ENCODE measurements at regions of chr3 and their contacts with region 1.

Region 1: DNA sequence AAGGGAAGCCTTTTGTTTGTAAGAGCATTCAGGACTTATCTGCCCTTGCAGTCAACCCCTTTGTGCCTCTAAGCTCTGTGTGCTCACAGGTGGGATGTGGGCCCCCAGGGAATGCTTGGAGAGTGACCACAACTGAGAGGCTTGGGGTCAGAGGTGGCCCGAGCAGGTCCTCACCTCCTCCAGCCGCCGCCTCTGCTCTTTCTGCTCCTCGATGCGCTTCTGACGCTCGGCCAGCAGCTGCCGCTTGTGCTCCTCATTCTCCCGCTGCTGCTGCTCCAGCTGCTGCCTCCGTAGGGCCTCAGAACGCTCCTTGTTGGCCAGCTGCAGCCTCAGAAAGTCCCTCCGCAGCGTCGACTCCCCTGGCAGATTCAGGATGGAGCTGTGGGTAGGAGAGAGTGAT is 130.8 kb upstream of the SLC2A2 start:
- DNase-seq: peak in 1 of 2 experiments; percentile 77
- H3K4me3 ChIP-seq: peak overlapping the region; percentile 17; the same call in 1 of the 2 replicates
- H3K27ac ChIP-seq: peak overlapping the region; percentile 93
- H3K4me1 ChIP-seq: peaks cover 53% of the 10 kb centered on the region
- H3K27me3 ChIP-seq: no peaks in the 10 kb centered on the region
- CTCF ChIP-seq: peak; percentile 43; the same call in 1 of the 2 replicates

Region 2: GRCh38 chr3:171055336-171056178 is 101.7 kb before region 1 on chr3:
- CTCF ChIA-PET with region 1: interaction called, 3 read pairs
- POLR2A ChIA-PET with region 1: interaction called, 14 read pairs
- intact Hi-C with region 1: loop called (anchors 1 kb)
- DNase-seq: peak; percentile 45 to 96
- H3K4me3 ChIP-seq: peak overlapping the region; percentile 26; the same call in 1 of the 2 replicates
- H3K27ac ChIP-seq: peak overlapping the region; percentile 81
- H3K4me1 ChIP-seq: peaks cover 39% of the 10 kb centered on the region
- H3K27me3 ChIP-seq: no peaks in the 10 kb centered on the region
- CTCF ChIP-seq: no peak

Region 3: GRCh38 chr3:171187706-171188290 is 30.5 kb after region 1 on chr3:
- CTCF ChIA-PET with region 1: no interaction called
- POLR2A ChIA-PET with region 1: no interaction called
- intact Hi-C with region 1: loop called (anchors 1 kb)
- DNase-seq: peak in 1 of 2 experiments; percentile 50
- H3K4me3 ChIP-seq: no peak overlapping the region
- H3K27ac ChIP-seq: no peak overlapping the region
- H3K4me1 ChIP-seq: peaks cover 44% of the 10 kb centered on the region
- H3K27me3 ChIP-seq: no peaks in the 10 kb centered on the region
- CTCF ChIP-seq: peak; percentile 81

Region 4: DNA sequence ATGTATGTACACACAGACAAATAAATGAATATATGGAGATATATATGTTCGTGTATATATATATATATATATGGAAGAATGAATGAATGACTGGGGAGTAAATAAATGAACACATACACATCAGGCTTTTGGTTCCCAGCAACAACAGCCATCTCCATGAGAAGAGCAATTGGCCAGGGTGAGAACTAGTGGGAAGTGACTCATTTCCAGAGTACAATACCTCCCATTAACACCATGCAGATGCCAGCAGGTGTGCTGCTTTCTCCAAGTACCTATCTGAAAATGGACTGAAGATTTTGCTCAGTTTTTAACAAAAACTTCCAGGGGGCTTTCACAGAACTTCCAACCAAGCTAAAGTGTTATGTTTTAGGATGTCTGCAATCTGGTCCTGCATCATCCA is 49.0 kb after region 1 on chr3:
- CTCF ChIA-PET with region 1: no interaction called
- POLR2A ChIA-PET with region 1: no interaction called
- intact Hi-C with region 1: loop called (anchors 2 kb)
- DNase-seq: no peak
- H3K4me3 ChIP-seq: no peak overlapping the region
- H3K27ac ChIP-seq: no peak overlapping the region
- H3K4me1 ChIP-seq: peaks cover 22% of the 10 kb centered on the region
- H3K27me3 ChIP-seq: no peaks in the 10 kb centered on the region
- CTCF ChIP-seq: no peak